Breast epithelium (tissue), 4 donors: ENCODE measurements at regions of chr17 and their contacts with region 1.

Region 1: GRCh38 chr17:43034894-43035293 is 9.9 kb downstream of the RND2 start:
- DNase-seq: no peak
- H3K4me3 ChIP-seq: no peak overlapping the region
- H3K27ac ChIP-seq: no peak overlapping the region
- H3K4me1 ChIP-seq: no peaks in the 10 kb centered on the region
- H3K27me3 ChIP-seq: no peaks in the 10 kb centered on the region
- CTCF ChIP-seq: no peak
- POLR2A ChIP-seq: no peak

Region 2: DNA sequence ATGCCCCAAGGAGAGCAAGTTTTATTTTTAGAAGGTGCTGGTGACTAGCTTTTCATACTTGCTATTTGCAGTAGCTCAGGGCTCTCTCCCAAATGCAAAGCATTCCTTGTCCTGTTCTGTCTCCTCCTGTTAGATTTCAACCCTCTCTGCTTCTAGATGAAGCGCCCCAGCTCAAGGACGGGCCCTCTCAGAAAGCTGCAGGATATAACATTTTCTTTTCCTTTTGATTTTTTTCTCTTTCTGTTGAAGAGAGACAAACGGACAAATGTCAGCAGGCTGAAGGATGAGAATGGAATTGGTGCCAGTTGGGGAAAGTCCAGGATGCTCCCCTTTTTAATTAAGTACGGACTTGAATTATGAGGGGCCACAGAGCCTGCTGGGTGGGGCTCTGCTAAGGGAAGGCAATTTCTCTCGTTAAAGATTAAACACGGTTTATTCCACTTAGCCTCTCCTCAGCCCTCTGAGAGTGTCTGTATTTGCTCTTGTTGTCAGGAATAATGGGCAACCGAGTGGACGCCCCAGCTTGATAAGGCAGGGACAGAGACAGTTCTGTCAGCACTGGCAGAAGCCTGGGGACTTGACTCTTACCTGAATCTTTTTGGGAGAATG is 517.4 kb after region 1 on chr17:
- intact Hi-C with region 1: loop called (anchors 5 kb)
- DNase-seq: no peak
- H3K4me3 ChIP-seq: no peak overlapping the region
- H3K27ac ChIP-seq: no peak overlapping the region
- H3K4me1 ChIP-seq: no peaks in the 10 kb centered on the region
- H3K27me3 ChIP-seq: no peaks in the 10 kb centered on the region
- CTCF ChIP-seq: no peak
- POLR2A ChIP-seq: no peak